ENCODE measurements at regions of chr4 and their contacts with region 1.

Region 1: GRCh38 chr4:70651864-70652506 is 14.3 kb downstream of the JCHAIN start:
- DNase-seq: no peak
- ATAC-seq: peak; percentile 64

Region 2: DNA sequence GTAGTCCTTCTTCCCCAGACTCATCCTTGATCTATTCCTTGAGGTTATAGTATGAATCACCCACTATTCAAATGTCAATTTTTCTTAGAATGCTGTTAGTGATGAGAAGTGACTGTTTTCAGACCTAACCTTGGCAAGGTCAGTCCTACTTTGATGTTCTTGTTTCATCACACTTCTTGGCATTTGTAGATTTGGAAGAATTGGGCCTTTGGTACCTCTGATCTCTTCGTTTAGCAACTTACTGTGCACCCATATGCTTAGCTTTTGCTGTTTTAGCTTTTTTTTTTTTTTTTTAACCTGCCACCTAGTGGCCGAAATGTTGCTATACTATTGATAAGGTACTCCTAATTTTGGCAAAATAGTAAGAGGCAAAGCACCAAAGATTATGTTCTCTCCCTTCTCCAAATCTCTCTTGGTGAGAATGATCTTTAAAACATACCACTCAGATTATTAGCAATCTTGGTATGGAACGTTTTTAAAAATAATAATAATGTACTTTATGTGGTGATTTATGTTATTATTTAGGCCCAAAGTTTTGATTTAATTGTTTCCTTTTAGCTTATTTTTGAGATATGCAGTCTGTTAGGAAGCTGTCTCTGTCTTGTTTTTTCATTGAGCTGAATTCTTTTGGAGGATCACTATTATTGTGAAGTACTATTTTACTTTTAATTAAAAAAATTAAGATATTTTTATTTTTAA is 358.1 kb after region 1 on chr4:
- intact Hi-C with region 1: loop called in 1 of 2 experiments (anchors 5 kb)
- DNase-seq: no peak
- ATAC-seq: peak; percentile 48

Measured in left colon (tissue), 2 donors.